CD8-positive, alpha-beta T cell (primary cell): ENCODE measurements at regions of chr10 and their contacts with region 1.

Region 1: GRCh38 chr10:7170626-7171322 is 240.1 kb downstream of the SFMBT2 start:
- DNase-seq: no peak
- ATAC-seq: no peak
- H3K4me3 ChIP-seq: no peak overlapping the region
- H3K4me3 Mint-ChIP-seq: no peak overlapping the region
- H3K27ac ChIP-seq: no peak overlapping the region
- H3K27ac Mint-ChIP-seq: no peak overlapping the region
- H3K4me1 ChIP-seq: no peaks in the 10 kb centered on the region
- H3K4me1 Mint-ChIP-seq: no peaks in the 10 kb centered on the region
- H3K27me3 ChIP-seq: no peaks in the 10 kb centered on the region
- H3K27me3 Mint-ChIP-seq: no peaks in the 10 kb centered on the region
- CTCF ChIP-seq: no peak

Region 2: GRCh38 chr10:7188456-7189050 is 17.8 kb after region 1 on chr10:
- CTCF ChIA-PET with region 1: no interaction called
- POLR2A ChIA-PET with region 1: no interaction called
- intact Hi-C with region 1: no loop called
- DNase-seq: no peak
- ATAC-seq: no peak
- H3K4me3 ChIP-seq: no peak overlapping the region
- H3K4me3 Mint-ChIP-seq: no peak overlapping the region
- H3K27ac ChIP-seq: no peak overlapping the region
- H3K27ac Mint-ChIP-seq: no peak overlapping the region
- H3K4me1 ChIP-seq: peaks cover 50% of the 10 kb centered on the region
- H3K4me1 Mint-ChIP-seq: peaks cover 55% of the 10 kb centered on the region
- H3K27me3 ChIP-seq: no peaks in the 10 kb centered on the region
- H3K27me3 Mint-ChIP-seq: no peaks in the 10 kb centered on the region
- CTCF ChIP-seq: no peak

Region 3: GRCh38 chr10:7199152-7199760 is 28.5 kb after region 1 on chr10:
- CTCF ChIA-PET with region 1: no interaction called
- POLR2A ChIA-PET with region 1: interaction called, 5 read pairs
- intact Hi-C with region 1: loop called in 1 of 2 experiments (anchors 1 kb)
- DNase-seq: peak in 1 of 9 experiments; percentile 17
- ATAC-seq: no peak
- H3K4me3 ChIP-seq: no peak overlapping the region
- H3K4me3 Mint-ChIP-seq: no peak overlapping the region
- H3K27ac ChIP-seq: no peak overlapping the region
- H3K27ac Mint-ChIP-seq: no peak overlapping the region
- H3K4me1 ChIP-seq: peaks cover 25% of the 10 kb centered on the region
- H3K4me1 Mint-ChIP-seq: peaks cover 29% of the 10 kb centered on the region
- H3K27me3 ChIP-seq: no peaks in the 10 kb centered on the region
- H3K27me3 Mint-ChIP-seq: no peaks in the 10 kb centered on the region
- CTCF ChIP-seq: no peak

Region 4: DNA sequence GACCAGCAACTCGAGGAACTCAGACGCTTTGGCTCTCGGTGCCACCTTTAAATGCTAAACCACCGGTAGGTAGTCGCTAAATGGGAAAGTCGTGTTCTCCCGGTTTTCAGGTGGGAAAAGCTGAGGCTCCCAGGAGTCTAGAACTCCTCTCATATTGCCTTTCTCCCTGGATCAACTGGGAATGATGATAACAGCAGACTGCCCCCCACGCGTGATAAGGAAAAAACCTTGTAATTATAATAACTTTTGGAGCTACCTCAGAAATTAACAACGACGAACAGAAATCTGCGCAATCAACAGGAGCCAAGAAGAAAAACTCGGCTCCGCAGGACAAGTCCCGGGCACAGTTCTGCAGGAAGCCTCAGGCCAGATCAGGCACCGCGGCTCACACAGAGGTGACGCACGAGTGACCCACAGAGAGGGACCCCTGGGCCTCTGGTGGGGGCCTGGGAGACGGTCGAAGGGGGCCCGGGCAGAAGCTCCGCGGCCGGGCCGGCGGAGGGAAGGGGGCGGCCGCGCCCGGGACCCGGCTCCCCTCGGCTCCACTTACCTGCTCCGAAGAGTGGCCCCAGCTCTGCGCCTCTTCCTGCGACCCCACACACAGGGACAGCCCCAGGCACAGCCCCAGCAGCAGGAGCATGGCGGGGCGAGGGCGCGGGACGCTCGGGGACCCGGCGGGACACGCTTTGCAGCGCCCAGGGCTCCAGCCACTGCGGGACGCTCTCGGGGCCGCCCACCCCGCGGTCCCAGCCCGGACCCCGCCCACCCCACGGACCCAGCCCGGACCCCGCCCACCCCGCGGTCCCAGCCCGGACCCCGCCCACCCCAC is 495.7 kb after region 1 on chr10 and contains the start of gene ITIH5:
- CTCF ChIA-PET with region 1: no interaction called
- POLR2A ChIA-PET with region 1: no interaction called
- intact Hi-C with region 1: no loop called
- DNase-seq: peak in 3 of 9 experiments; percentile 6 to 17 (median 14)
- ATAC-seq: peak; percentile 24
- H3K4me3 ChIP-seq: peak within 1 kb of the TSS; percentile 6 to 15
- H3K4me3 Mint-ChIP-seq: peak within 1 kb of the TSS; percentile 80
- H3K27ac ChIP-seq: no peak within 1 kb of the TSS
- H3K27ac Mint-ChIP-seq: no peak within 1 kb of the TSS
- H3K4me1 ChIP-seq: peaks cover 11% of the 10 kb centered on the region
- H3K4me1 Mint-ChIP-seq: peaks cover 18% of the 10 kb centered on the region
- H3K27me3 ChIP-seq: peaks cover 10 to 12% of the 10 kb centered on the region in 2 experiments
- H3K27me3 Mint-ChIP-seq: peaks cover 48% of the 10 kb centered on the region
- CTCF ChIP-seq: no peak
- total RNA-seq, gene ITIH5: not detected